H1 (cell line): ENCODE measurements at regions of chr1 and their contacts with region 1.

Region 1: GRCh38 chr1:94920051-94920450 is 6.9 kb downstream of the CNN3 start:
- DNase-seq: no peak
- H3K4me3 ChIP-seq: no peak overlapping the region
- H3K27ac ChIP-seq: no peak overlapping the region
- H3K4me1 ChIP-seq: peaks cover 4 to 12% (median 5%) of the 10 kb centered on the region in 4 experiments; a peak in 6 of 7 replicates
- H3K27me3 ChIP-seq: no peaks in the 10 kb centered on the region
- CTCF ChIP-seq: no peak
- EP300 ChIP-seq: no peak
- POLR2A ChIP-seq: no peak
- RAD21 ChIP-seq: no peak

Region 2: GRCh38 chr1:94909486-94909885 is 10.6 kb before region 1 on chr1:
- CTCF ChIA-PET with region 1: interaction called, 12 read pairs
- POLR2A ChIA-PET with region 1: interaction called, 29 read pairs
- DNase-seq: no peak
- H3K4me3 ChIP-seq: no peak overlapping the region
- H3K27ac ChIP-seq: no peak overlapping the region
- H3K4me1 ChIP-seq: peaks cover 8 to 26% (median 19%) of the 10 kb centered on the region in 4 experiments
- H3K27me3 ChIP-seq: no peaks in the 10 kb centered on the region
- CTCF ChIP-seq: no peak
- EP300 ChIP-seq: no peak
- POLR2A ChIP-seq: no peak
- RAD21 ChIP-seq: no peak

Region 3: DNA sequence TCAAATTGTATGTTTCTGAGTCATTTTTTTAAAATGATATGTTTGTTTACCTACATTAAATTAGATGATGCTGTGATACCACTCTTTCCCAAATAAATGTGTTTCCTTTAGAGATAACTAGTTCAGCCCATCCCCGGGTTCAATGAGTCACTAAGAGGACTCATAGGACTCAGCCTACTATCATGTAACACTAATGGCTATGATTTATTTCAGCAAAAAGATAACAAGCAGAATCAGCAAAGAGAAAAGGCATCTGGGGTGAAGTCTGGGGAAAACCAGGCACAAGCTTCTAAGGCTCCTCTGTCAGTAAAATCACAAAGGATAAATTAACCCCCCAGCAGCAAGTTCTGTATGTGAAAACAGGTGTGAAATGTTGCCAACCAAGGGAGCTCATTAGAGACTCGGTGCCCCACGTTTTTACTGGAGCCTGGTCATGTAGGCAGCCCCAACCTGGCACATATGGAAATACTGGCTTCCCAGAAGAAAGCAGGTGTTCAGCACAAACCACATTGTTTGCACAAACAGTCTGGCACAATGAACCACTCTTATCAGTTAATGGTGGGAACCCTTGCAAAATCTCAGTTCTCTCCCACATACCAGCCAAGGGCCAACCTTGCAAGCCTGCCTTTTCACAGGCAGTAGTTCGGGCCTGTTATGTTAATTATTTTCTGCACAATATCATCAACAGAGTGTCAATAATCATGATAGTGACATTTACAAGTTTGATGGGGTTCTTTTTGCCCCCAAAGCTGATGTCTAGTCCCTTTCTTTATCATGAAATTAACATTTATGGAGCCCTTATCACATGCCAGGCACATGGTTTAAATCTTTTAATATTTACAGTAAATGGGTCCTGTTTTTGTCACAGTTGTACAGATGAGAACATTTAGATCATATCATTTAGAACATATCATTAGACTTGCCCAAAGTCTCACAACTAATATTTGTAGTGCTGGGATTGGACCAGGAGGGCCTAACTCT is 29.9 kb after region 1 on chr1:
- CTCF ChIA-PET with region 1: no interaction called
- POLR2A ChIA-PET with region 1: no interaction called
- DNase-seq: no peak
- H3K4me3 ChIP-seq: no peak overlapping the region
- H3K27ac ChIP-seq: no peak overlapping the region
- H3K4me1 ChIP-seq: peaks cover 0 to 5% (median 5%) of the 10 kb centered on the region in 4 experiments; a peak in 3 of 7 replicates
- H3K27me3 ChIP-seq: no peaks in the 10 kb centered on the region
- CTCF ChIP-seq: no peak
- EP300 ChIP-seq: no peak
- POLR2A ChIP-seq: no peak
- RAD21 ChIP-seq: no peak

Region 4: GRCh38 chr1:94969137-94969536 is 49.1 kb after region 1 on chr1:
- CTCF ChIA-PET with region 1: no interaction called
- POLR2A ChIA-PET with region 1: no interaction called
- DNase-seq: no peak
- H3K4me3 ChIP-seq: no peak overlapping the region
- H3K27ac ChIP-seq: no peak overlapping the region
- H3K4me1 ChIP-seq: peaks cover 0 to 4% (median 3%) of the 10 kb centered on the region in 4 experiments; a peak in 4 of 7 replicates
- H3K27me3 ChIP-seq: no peaks in the 10 kb centered on the region
- CTCF ChIP-seq: no peak
- EP300 ChIP-seq: no peak
- POLR2A ChIP-seq: no peak
- RAD21 ChIP-seq: no peak